GM18951 (cell line): ENCODE measurements at regions of chr12 and their contacts with region 1.

Region 1: DNA sequence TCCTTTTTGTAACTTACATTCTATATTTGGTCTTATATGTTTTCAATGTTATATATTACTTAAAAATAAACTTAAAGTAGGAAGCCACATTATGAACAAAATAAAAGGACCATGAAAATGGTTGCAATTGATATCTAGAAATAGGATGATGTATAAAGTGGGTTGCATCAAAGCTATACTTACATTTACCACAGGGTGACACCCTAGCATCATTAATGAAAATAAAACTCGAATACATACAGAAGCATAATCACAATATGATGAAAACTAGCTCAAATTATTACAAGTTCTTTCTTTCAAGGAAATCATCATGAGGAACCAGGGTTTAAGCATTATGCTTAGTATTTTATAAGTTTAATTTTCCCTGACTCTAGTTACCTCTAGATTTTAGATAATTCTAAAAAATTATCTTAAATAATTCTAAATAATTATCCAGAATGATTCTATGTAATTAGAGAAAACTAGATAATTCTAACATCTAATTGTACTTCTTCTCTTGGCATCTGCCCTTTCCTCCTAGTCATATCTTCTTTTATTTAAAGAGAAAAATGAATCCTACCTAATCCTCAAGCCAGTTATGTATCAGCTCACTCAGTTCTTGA is 31.2 kb downstream of the TAS2R7 start:
- POLR2A ChIP-seq: no peak

Region 2: GRCh38 chr12:10849425-10849878 is 78.2 kb after region 1 on chr12 and contains the start of gene PRR4:
- in situ Hi-C with region 1: no loop called
- POLR2A ChIP-seq: no peak

Region 3: DNA sequence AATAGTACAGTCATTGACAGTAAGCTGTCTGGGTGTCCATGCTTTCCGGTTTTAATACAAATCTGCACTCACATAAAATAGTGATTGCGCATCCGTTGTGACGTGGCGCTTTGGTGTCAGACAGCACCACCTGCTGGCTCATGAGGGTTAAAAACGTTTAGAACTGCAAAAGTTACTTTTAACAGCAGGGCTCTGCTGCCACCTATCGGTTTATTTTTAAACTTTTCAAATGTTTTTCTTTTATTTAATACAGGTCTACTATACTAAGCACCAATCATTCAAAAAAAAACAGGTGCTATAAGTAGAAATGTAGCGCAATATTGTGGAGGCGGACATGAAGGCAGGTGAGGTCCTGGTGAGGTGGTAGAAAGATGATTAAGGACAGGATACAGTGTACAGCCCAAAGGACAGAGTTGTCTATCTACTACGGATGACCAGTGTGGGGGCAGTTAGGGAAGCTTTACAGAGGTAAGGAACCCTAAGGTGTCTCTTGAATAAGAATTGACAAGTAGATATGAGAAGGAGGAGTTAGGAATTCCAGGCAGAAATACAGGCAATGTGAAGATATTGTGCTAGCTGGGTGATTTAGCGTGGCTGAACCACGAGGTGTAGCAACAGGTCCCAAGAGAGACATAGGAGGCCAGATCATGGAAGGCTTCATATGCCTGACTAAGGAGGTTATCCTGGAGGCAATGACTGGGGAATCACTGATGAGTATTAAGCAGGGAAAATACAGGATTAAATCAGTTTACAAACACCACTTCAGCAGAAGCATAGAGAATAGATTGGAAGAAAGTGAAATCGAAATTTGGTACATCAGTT is 715.6 kb after region 1 on chr12:
- in situ Hi-C with region 1: loop called (anchors 10 kb)
- POLR2A ChIP-seq: no peak